GM12878 (cell line): ENCODE measurements at regions of chr11 and their contacts with region 1.

Region 1: GRCh38 chr11:10750838-10751580 is at the start of gene CTR9:
- DNase-seq: peak; percentile 68
- ATAC-seq: peak; percentile 96
- H3K4me3 ChIP-seq: peak within 1 kb of the TSS; percentile 92
- H3K27ac ChIP-seq: peak within 1 kb of the TSS; percentile 93
- H3K4me1 ChIP-seq: peaks cover 3% of the 10 kb centered on the region; the same call in 1 of the 2 replicates
- H3K27me3 ChIP-seq: no peaks in the 10 kb centered on the region
- CTCF ChIP-seq: peak; percentile 20 to 59 (median 44); a peak in 4 of 6 replicates
- EP300 ChIP-seq: no peak
- POLR2A ChIP-seq: peak; percentile 99
- RAD21 ChIP-seq: peak; percentile 43; the same call in 1 of the 2 replicates
- polyA plus RNA-seq, gene CTR9: 13.9 to 24.3 TPM

Region 2: GRCh38 chr11:10762185-10762584 is 11.2 kb after region 1 on chr11:
- CTCF ChIA-PET with region 1: interaction called, 20 read pairs
- POLR2A ChIA-PET with region 1: interaction called, 3 read pairs
- RAD21 ChIA-PET with region 1: interaction called, 3 read pairs
- SMC1A ChIA-PET with region 1: interaction called, 5 read pairs
- in situ Hi-C with region 1: no loop called
- intact Hi-C with region 1: no loop called
- DNase-seq: peak; percentile 60
- ATAC-seq: peak; percentile 97
- H3K4me3 ChIP-seq: no peak overlapping the region
- H3K27ac ChIP-seq: peak overlapping the region; percentile 67
- H3K4me1 ChIP-seq: peaks cover 11% of the 10 kb centered on the region
- H3K27me3 ChIP-seq: no peaks in the 10 kb centered on the region
- CTCF ChIP-seq: peak in 1 of 3 experiments; percentile 11; a peak in 2 of 6 replicates
- EP300 ChIP-seq: peak; percentile 51 to 72; a peak in 2 of 4 replicates
- POLR2A ChIP-seq: no peak
- RAD21 ChIP-seq: no peak

Region 3: DNA sequence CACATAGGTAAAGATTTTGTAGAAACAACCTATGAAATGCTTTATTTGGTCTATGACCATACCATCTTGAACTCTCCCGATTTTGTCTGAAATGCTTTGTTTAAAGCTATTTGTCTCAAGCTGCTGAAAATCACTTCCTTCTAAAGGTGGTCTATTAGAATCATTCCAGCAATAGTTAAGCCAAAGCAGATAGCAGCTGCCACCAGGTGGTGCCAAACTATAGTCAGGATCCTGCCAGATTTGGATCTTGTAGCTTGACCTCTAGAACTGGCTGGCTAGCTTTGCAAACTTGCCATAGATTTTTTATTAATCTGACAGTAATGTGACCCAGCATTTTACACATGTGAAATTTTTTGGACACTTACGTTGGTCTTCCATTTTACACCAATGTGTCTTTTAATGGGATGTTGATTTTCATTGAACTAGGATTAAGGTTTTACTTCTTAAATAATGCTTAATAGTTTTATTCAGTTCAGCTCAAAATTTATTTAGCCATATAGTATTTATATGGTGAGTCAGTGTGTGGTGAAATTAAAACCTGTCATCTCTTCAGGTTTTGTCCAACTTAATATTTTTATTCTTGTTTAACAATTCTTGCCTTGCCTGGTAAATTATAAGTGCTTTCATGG is 19.7 kb after region 1 on chr11:
- CTCF ChIA-PET with region 1: interaction called, 23 read pairs
- POLR2A ChIA-PET with region 1: interaction called, 3 read pairs
- RAD21 ChIA-PET with region 1: interaction called, 4 read pairs
- SMC1A ChIA-PET with region 1: interaction called, 22 read pairs
- in situ Hi-C with region 1: no loop called
- intact Hi-C with region 1: no loop called
- DNase-seq: no peak
- ATAC-seq: peak; percentile 84
- H3K4me3 ChIP-seq: no peak overlapping the region
- H3K27ac ChIP-seq: no peak overlapping the region
- H3K4me1 ChIP-seq: no peaks in the 10 kb centered on the region
- H3K27me3 ChIP-seq: no peaks in the 10 kb centered on the region
- CTCF ChIP-seq: peak; percentile 62 to 79 (median 69)
- EP300 ChIP-seq: no peak
- POLR2A ChIP-seq: no peak
- RAD21 ChIP-seq: peak; percentile 29

Region 4: GRCh38 chr11:10857709-10858438 is 106.9 kb after region 1 on chr11 and contains the start of gene ZBED5:
- CTCF ChIA-PET with region 1: interaction called, 3 read pairs
- POLR2A ChIA-PET with region 1: interaction called, 5 read pairs
- RAD21 ChIA-PET with region 1: no interaction called
- SMC1A ChIA-PET with region 1: interaction called, 3 read pairs
- in situ Hi-C with region 1: no loop called
- intact Hi-C with region 1: loop called (anchors 5 kb)
- DNase-seq: peak; percentile 90
- ATAC-seq: peak; percentile 95
- H3K4me3 ChIP-seq: peak within 1 kb of the TSS; percentile 92
- H3K27ac ChIP-seq: peak within 1 kb of the TSS; percentile 87
- H3K4me1 ChIP-seq: no peaks in the 10 kb centered on the region
- H3K27me3 ChIP-seq: no peaks in the 10 kb centered on the region
- CTCF ChIP-seq: peak in 2 of 3 experiments; percentile 1 to 4; a peak in 1 of 6 replicates
- EP300 ChIP-seq: peak in 1 of 2 experiments; percentile 53; a peak in 3 of 4 replicates
- POLR2A ChIP-seq: peak; percentile 84
- RAD21 ChIP-seq: no peak
- polyA plus RNA-seq, gene ZBED5: 27.3 to 29.4 TPM